ENCODE measurements at regions of chr15 and their contacts with region 1.

Region 1: DNA sequence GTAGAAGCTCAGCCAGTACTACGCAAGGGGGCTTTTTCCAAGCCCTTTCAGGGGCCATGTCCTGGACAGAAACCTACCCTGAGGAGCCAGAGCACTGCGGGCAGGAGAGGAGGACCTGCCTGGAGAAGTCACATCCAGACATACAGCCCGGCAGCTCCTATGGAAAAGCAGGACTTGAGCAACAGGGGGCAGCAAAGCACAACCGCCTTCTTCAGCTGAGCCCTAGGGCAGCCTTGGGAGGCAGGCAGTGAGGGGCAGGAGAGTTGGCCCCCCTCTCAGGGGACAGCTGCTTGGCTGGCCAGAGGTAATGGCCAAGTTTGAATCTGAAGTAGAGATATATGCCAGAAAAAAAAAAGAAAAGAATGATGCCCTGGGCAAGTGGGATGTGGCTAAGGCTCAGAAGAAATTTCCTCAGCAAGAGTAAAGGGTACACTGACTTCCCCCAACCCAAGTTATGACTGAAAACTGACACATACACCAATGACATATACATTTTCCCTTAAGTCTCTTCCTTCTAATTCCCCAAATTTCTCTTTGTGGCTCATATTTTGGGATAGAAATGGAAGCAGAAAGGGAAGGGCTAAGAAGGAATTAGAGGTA is 56.9 kb downstream of the CYP19A1 start:
- DNase-seq: peak; percentile 36 to 57 (median 41)
- H3K4me3 ChIP-seq: no peak overlapping the region
- H3K27ac ChIP-seq: no peak overlapping the region
- H3K4me1 ChIP-seq: peaks cover 0 to 2% (median 0%) of the 10 kb centered on the region in 4 experiments
- H3K27me3 ChIP-seq: peaks cover 2 to 15% (median 4%) of the 10 kb centered on the region in 5 experiments

Region 2: DNA sequence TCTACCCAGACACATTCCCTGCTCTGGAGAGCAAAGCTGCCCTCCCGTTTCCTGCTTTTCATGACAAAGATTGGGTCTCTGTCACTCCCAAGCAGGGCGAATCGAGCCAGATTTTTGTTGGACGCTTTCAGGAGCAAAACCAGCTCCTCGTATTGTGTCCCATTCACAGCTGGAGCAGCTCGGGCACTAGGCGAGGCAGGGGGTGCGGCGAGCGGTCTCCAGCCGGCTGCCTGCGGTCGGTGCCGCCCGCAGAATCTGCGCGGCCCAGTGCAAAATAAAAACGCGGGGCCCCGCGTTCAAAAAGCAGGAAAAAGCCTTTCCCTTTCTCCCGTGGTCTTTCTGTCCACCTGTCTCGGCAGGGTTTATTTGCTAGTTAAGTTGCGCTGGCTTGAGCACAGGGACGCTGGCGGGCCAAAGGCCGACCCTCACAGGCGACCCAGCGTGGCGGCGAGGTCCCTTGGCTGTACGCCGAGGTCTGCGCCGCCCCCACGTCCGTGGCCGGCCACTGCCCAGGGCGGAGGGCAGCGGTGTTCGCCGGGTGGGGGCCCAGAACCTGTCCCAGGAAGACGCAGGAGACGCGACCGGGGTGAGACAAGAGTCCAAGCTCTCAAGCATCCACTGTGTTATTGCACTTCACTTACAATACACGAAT is 14.3 kb before region 1 on chr15:
- CTCF ChIA-PET with region 1: interaction called, 14 read pairs
- POLR2A ChIA-PET with region 1: no interaction called
- DNase-seq: peak in 1 of 3 donors; percentile 12
- H3K4me3 ChIP-seq: peak overlapping the region; percentile 11 to 73 (median 58)
- H3K27ac ChIP-seq: no peak overlapping the region
- H3K4me1 ChIP-seq: peaks cover 0 to 13% (median 9%) of the 10 kb centered on the region in 4 experiments
- H3K27me3 ChIP-seq: peaks cover 4 to 56% (median 31%) of the 10 kb centered on the region in 5 experiments

Region 3: DNA sequence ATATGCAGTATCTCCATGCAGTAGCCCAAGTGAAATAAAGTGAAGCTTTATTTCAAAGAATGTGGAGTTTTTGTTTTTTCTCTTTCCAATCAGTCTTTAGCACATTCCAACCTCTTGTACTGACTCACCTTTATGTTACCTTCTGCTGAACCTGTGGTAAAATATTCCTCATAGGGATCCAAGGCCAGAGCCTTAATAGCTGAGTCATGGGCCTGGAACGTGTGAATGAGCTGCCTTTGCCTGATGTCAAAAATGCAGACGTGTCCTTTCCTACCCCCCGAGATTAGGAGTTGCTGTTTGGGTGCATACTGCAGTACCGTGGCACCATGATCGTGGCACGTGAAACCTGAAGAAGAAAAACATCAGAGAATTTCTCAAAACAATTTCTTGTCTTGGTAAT is 168.5 kb after region 1 on chr15:
- CTCF ChIA-PET with region 1: no interaction called
- POLR2A ChIA-PET with region 1: no interaction called
- DNase-seq: no peak
- H3K4me3 ChIP-seq: no peak overlapping the region
- H3K27ac ChIP-seq: no peak overlapping the region
- H3K4me1 ChIP-seq: no peaks in the 10 kb centered on the region
- H3K27me3 ChIP-seq: no peaks in the 10 kb centered on the region

Region 4: GRCh38 chr15:51622604-51623370 is 341.3 kb after region 1 on chr15 and contains the start of gene DMXL2:
- CTCF ChIA-PET with region 1: no interaction called
- POLR2A ChIA-PET with region 1: no interaction called
- DNase-seq: peak; percentile 79 to 91 (median 90)
- H3K4me3 ChIP-seq: peak within 1 kb of the TSS; percentile 72 to 93 (median 86)
- H3K27ac ChIP-seq: peak within 1 kb of the TSS; percentile 28 to 83
- H3K4me1 ChIP-seq: peaks cover 12 to 46% (median 22%) of the 10 kb centered on the region in 4 experiments
- H3K27me3 ChIP-seq: no peaks in the 10 kb centered on the region